MCF 10A (cell line): ENCODE measurements at regions of chr1 and their contacts with region 1.

Region 1: GRCh38 chr1:226121587-226122400 is 59.3 kb downstream of the H3-3A start:
- DNase-seq: peak; percentile 72
- H3K4me3 Mint-ChIP-seq: peak overlapping the region; percentile 65
- H3K27ac Mint-ChIP-seq: no peak overlapping the region
- H3K4me1 Mint-ChIP-seq: peaks cover 29% of the 10 kb centered on the region
- H3K27me3 Mint-ChIP-seq: no peaks in the 10 kb centered on the region
- CTCF ChIP-seq: peak; percentile 99

Region 2: DNA sequence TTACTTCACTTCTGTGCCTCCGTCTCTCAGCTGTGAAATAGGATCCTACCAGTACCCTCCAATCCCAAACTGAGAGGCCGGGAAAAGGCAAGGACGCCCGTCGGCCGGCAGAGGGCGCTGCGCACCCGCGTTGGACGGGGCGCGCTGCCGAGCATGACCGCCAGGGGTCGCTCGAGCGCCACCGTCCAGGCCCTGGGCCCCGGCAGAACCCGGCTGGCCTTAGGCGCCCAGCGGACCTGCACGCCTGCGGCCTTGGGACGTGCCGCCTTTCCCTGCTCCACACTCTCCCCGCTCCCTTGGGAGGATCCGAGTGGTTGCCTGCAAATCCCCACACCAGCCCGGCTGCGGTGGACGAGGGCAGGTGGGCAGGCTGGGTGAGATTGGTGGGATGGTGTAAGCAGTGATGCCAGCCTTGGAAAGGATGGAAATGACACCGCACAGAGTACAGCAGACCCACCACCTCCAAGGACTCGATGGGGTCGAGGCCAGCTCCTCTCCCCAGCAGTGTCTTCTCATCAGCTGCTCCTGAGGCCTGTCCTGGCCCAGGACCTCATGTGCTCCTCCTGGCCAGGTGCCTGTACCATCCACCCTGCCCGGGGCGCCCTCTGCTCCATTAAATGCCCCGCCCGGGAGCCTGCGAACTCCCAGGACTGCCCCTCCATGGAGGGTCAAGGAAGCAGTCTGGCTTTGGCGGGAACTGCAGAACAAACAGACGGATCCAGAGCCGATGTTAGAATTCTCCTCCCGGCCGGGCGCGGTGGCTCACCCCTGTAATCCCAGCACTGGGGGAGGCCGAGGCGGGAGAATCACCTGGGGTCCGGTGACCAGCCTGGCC is 646.6 kb before region 1 on chr1:
- CTCF ChIA-PET with region 1: interaction called, 5 read pairs
- POLR2A ChIA-PET with region 1: no interaction called
- intact Hi-C with region 1: loop called (anchors 1 kb)
- DNase-seq: peak; percentile 85
- H3K4me3 Mint-ChIP-seq: no peak overlapping the region
- H3K27ac Mint-ChIP-seq: no peak overlapping the region
- H3K4me1 Mint-ChIP-seq: no peaks in the 10 kb centered on the region
- H3K27me3 Mint-ChIP-seq: no peaks in the 10 kb centered on the region
- CTCF ChIP-seq: peak; percentile 100

Region 3: GRCh38 chr1:226074046-226074445 is 47.7 kb before region 1 on chr1:
- CTCF ChIA-PET with region 1: interaction called, 134 read pairs
- POLR2A ChIA-PET with region 1: interaction called, 4 read pairs
- intact Hi-C with region 1: no loop called
- DNase-seq: no peak
- H3K4me3 Mint-ChIP-seq: no peak overlapping the region
- H3K27ac Mint-ChIP-seq: peak overlapping the region; percentile 33
- H3K4me1 Mint-ChIP-seq: peaks cover 16% of the 10 kb centered on the region
- H3K27me3 Mint-ChIP-seq: no peaks in the 10 kb centered on the region
- CTCF ChIP-seq: no peak

Region 4: GRCh38 chr1:226149806-226150205 is 28.0 kb after region 1 on chr1:
- CTCF ChIA-PET with region 1: interaction called, 50 read pairs
- POLR2A ChIA-PET with region 1: interaction called, 3 read pairs
- intact Hi-C with region 1: no loop called
- DNase-seq: peak; percentile 34
- H3K4me3 Mint-ChIP-seq: no peak overlapping the region
- H3K27ac Mint-ChIP-seq: no peak overlapping the region
- H3K4me1 Mint-ChIP-seq: no peaks in the 10 kb centered on the region
- H3K27me3 Mint-ChIP-seq: no peaks in the 10 kb centered on the region
- CTCF ChIP-seq: no peak

Region 5: GRCh38 chr1:226201029-226201593 is 79.3 kb after region 1 on chr1:
- CTCF ChIA-PET with region 1: interaction called, 207 read pairs
- POLR2A ChIA-PET with region 1: interaction called, 10 read pairs
- intact Hi-C with region 1: loop called (anchors 1 kb)
- DNase-seq: peak; percentile 54
- H3K4me3 Mint-ChIP-seq: no peak overlapping the region
- H3K27ac Mint-ChIP-seq: no peak overlapping the region
- H3K4me1 Mint-ChIP-seq: no peaks in the 10 kb centered on the region
- H3K27me3 Mint-ChIP-seq: peaks cover 13% of the 10 kb centered on the region
- CTCF ChIP-seq: peak; percentile 39

Region 6: DNA sequence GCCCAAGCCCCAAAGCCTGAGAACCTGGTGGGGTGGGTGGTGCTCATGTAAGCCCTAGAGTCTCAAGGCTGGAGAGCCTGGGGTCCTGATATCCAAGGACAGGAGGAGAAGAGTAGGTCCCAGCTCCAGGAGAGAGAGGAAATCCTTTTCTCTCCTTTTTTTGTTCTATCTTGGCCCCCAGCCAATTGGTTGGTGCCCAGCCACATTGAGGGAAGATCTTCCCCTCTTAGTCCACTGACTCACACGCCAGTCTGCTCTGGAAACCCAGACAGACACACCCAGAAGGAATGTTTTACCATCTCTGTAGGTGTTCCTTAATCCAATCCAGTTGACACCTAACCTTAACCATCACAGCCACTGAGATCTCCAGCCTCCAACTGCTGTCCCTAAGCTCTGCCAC is 203.4 kb after region 1 on chr1:
- CTCF ChIA-PET with region 1: interaction called, 118 read pairs
- POLR2A ChIA-PET with region 1: no interaction called
- intact Hi-C with region 1: no loop called
- DNase-seq: peak; percentile 92
- H3K4me3 Mint-ChIP-seq: no peak overlapping the region
- H3K27ac Mint-ChIP-seq: no peak overlapping the region
- H3K4me1 Mint-ChIP-seq: peaks cover 15% of the 10 kb centered on the region
- H3K27me3 Mint-ChIP-seq: no peaks in the 10 kb centered on the region
- CTCF ChIP-seq: no peak